ENCODE measurements at regions of chr16 and their contacts with region 1.

Region 1: GRCh38 chr16:11546608-11547061 is 40.1 kb downstream of the LITAF start:
- ATAC-seq: peak in 7 of 8 experiments; percentile 29 to 90 (median 43)
- H3K4me3 ChIP-seq: no peak overlapping the region
- H3K27ac ChIP-seq: peak overlapping the region; percentile 3 to 8
- H3K4me1 ChIP-seq: peaks cover 20 to 23% of the 10 kb centered on the region in 2 donors

Region 2: DNA sequence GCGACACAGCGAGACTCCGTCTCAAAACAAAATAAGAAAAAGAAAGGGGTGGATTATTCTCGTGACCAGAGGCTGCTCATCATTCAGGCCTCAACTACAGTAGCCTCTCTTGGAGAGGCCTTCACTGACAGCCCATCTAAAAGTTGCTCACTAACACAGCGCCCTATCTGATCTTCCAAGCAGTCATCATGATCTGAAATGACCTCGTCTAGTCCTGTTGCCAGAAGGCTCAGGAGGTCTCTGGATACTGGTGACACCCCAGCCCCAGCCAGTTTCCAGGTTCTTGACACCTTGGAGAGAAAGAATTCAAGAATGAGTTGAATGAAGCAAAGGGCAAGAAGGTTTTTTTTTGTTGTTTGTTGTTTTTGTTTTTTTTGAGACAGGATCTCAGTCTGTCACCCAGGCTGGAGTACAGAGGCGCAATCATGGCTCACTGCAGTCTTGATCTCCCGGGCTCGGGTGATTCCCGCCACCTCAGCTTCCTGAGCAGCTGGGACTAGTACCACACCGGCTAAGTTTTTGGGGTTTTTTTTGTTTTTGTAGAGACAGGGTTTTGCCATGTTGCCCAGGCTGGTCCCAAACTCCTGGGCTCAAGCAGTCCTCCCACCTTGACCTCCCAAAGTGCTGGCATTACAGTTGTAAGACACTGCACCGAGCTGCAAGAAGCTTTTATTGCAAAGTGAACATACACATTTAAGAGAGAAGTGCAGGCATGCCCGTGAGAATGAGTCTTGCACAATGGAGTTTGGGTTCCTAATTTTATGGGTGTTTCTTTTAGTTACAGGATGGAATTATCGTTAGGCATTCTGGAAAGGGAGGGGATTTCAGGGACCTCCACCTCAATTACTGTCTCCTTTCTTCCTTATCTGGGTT is 253.1 kb after region 1 on chr16:
- in situ Hi-C with region 1: loop called in 1 of 9 experiments (anchors 25 kb)
- ATAC-seq: no peak
- H3K4me3 ChIP-seq: no peak overlapping the region
- H3K27ac ChIP-seq: no peak overlapping the region
- H3K4me1 ChIP-seq: peaks cover 19 to 20% of the 10 kb centered on the region in 2 donors

Region 3: GRCh38 chr16:12002447-12003006 is 455.9 kb after region 1 on chr16:
- in situ Hi-C with region 1: no loop called
- ATAC-seq: peak in 6 of 8 experiments; percentile 80 to 99 (median 99)
- H3K4me3 ChIP-seq: no peak overlapping the region
- H3K27ac ChIP-seq: peak overlapping the region; percentile 4 to 28
- H3K4me1 ChIP-seq: peaks cover 0 to 3% of the 10 kb centered on the region in 2 donors